ENCODE measurements at regions of chr12 and their contacts with region 1.

Region 1: GRCh38 chr12:55926738-55927587 is 731 bp downstream of the PYM1 start:
- DNase-seq: peak; percentile 70 to 91 (median 87)
- ATAC-seq: peak; percentile 65
- H3K4me3 ChIP-seq: peak overlapping the region; percentile 99
- H3K4me3 Mint-ChIP-seq: peak overlapping the region; percentile 96 to 100 (median 98)
- H3K27ac ChIP-seq: peak overlapping the region; percentile 90
- H3K27ac Mint-ChIP-seq: peak overlapping the region; percentile 96 to 100 (median 97)
- H3K4me1 ChIP-seq: peaks cover 25 to 28% of the 10 kb centered on the region in 2 donors
- H3K4me1 Mint-ChIP-seq: peaks cover 33 to 61% (median 50%) of the 10 kb centered on the region in 7 donors
- H3K27me3 ChIP-seq: no peaks in the 10 kb centered on the region
- H3K27me3 Mint-ChIP-seq: peaks cover 0 to 2% (median 0%) of the 10 kb centered on the region in 5 donors

Region 2: DNA sequence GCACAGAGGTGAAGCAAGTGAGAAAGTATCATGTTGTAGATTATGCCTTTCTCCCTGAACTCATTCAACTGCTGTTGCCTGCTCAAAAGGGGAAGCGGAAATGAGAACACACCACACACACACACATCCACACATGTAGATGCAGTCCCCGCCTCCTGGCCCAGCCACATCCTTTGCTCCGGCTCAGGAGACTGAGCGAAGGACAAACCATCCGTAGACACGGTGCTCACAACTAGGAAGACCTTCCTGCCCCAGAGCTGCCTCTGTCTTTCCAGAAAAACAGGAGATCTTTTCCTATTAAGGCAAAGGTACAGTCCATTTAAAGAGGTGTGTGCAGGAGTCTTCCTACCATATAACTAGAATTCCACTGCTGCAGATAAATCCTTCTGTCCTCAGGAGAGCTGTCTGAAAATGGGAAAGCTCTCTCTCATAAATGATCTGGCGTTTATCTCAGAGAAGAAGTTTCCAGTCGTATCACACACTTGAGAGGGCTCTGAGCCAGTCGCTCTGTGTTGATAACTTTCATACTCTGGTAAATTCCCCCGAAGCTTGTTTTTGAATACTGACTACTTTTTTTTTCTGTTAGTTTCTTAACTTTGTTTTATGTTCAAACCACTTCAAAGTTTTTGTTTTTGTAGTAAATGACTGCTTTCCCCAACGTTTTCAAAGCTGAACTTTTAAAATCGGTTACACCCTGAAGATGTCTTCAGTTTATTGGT is 942.1 kb before region 1 on chr12 and contains the start of gene TESPA1:
- CTCF ChIA-PET with region 1: no interaction called
- POLR2A ChIA-PET with region 1: no interaction called
- intact Hi-C with region 1: loop called in 1 of 2 experiments (anchors 5 kb)
- DNase-seq: peak; percentile 55 to 94 (median 90)
- ATAC-seq: peak; percentile 93
- H3K4me3 ChIP-seq: peak within 1 kb of the TSS; percentile 67
- H3K4me3 Mint-ChIP-seq: peak within 1 kb of the TSS; percentile 90 to 98 (median 95)
- H3K27ac ChIP-seq: peak within 1 kb of the TSS; percentile 94
- H3K27ac Mint-ChIP-seq: peak within 1 kb of the TSS; percentile 95 to 100 (median 98)
- H3K4me1 ChIP-seq: peaks cover 49 to 51% of the 10 kb centered on the region in 2 donors
- H3K4me1 Mint-ChIP-seq: peaks cover 45 to 78% (median 69%) of the 10 kb centered on the region in 7 donors
- H3K27me3 ChIP-seq: no peaks in the 10 kb centered on the region
- H3K27me3 Mint-ChIP-seq: no peaks in the 10 kb centered on the region
- total RNA-seq, gene TESPA1: 120 to 301 (median 186) TPM

Region 3: GRCh38 chr12:55817346-55818139 is 109.4 kb before region 1 on chr12 and contains the starts of genes ORMDL2 and SARNP:
- CTCF ChIA-PET with region 1: interaction called, 8 read pairs
- POLR2A ChIA-PET with region 1: interaction called, 243 read pairs
- intact Hi-C with region 1: loop called (anchors 1 kb)
- DNase-seq: peak; percentile 81 to 99 (median 98)
- ATAC-seq: peak; percentile 96
- H3K4me3 ChIP-seq: peak within 1 kb of the TSS; percentile 94
- H3K4me3 Mint-ChIP-seq: no peak within 1 kb of the TSS
- H3K27ac ChIP-seq: peak within 1 kb of the TSS; percentile 88
- H3K27ac Mint-ChIP-seq: no peak within 1 kb of the TSS
- H3K4me1 ChIP-seq: peaks cover 22 to 41% of the 10 kb centered on the region in 2 donors
- H3K4me1 Mint-ChIP-seq: peaks cover 32 to 45% (median 37%) of the 10 kb centered on the region in 7 donors
- H3K27me3 ChIP-seq: no peaks in the 10 kb centered on the region
- H3K27me3 Mint-ChIP-seq: no peaks in the 10 kb centered on the region
- total RNA-seq, gene ORMDL2: 12.3 to 67.3 (median 40.5) TPM
- total RNA-seq, gene SARNP: 28.0 to 73.0 (median 41.7) TPM

Region 4: DNA sequence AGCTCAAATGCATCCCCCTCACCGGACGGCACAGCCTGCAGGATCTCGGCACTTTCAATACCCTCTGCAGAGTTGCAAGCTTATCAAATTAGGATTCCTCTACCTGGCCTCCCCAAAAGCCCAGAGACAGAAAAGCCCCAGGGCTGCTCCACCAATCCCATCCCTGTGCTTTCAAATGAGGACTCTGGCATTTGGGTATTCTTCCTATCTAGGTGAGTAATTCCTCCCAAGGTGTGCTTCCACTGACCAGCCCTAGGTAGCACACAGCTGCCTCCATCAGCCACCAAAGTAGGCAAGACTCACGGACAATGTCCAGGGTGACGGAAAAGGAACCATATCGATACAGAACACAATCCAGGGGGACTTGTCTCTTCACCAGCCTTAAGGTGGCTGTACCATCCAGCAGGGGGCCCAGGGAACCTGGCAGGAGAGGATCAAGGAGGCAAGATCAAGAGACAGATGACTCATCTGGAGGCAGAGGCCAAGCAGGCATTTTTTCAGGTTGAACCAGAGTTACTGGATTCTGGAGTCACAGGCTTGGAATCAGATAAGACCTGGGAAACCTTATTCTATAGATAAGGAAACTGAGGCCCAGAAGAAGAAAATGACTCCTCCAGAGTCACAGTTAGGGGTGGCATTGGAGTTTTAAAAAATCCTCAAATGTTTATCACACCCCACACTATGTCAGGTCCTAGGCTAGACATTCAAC is 29.0 kb after region 1 on chr12:
- CTCF ChIA-PET with region 1: interaction called, 4 read pairs
- POLR2A ChIA-PET with region 1: interaction called, 728 read pairs
- intact Hi-C with region 1: loop called in 1 of 2 experiments (anchors 1 kb)
- DNase-seq: peak in 4 of 9 donors; percentile 41 to 47 (median 44)
- ATAC-seq: peak; percentile 71
- H3K4me3 ChIP-seq: no peak overlapping the region
- H3K4me3 Mint-ChIP-seq: peak overlapping the region in 1 of 10 donors; percentile 21
- H3K27ac ChIP-seq: peak overlapping the region; percentile 22
- H3K27ac Mint-ChIP-seq: peak overlapping the region; percentile 6 to 90 (median 78)
- H3K4me1 ChIP-seq: peaks cover 4 to 8% of the 10 kb centered on the region in 2 donors
- H3K4me1 Mint-ChIP-seq: peaks cover 12 to 38% (median 21%) of the 10 kb centered on the region in 7 donors
- H3K27me3 ChIP-seq: no peaks in the 10 kb centered on the region
- H3K27me3 Mint-ChIP-seq: no peaks in the 10 kb centered on the region

Region 5: GRCh38 chr12:56041552-56042429 is 114.8 kb after region 1 on chr12 and contains the start of gene RPS26:
- CTCF ChIA-PET with region 1: no interaction called
- POLR2A ChIA-PET with region 1: no interaction called
- intact Hi-C with region 1: loop called (anchors 1 to 2 kb)
- DNase-seq: peak; percentile 75 to 97 (median 94)
- ATAC-seq: peak; percentile 94
- H3K4me3 ChIP-seq: peak within 1 kb of the TSS; percentile 100
- H3K4me3 Mint-ChIP-seq: peak within 1 kb of the TSS; percentile 91 to 100 (median 98)
- H3K27ac ChIP-seq: peak within 1 kb of the TSS; percentile 84
- H3K27ac Mint-ChIP-seq: peak within 1 kb of the TSS; percentile 94 to 99 (median 97)
- H3K4me1 ChIP-seq: peaks cover 16 to 19% of the 10 kb centered on the region in 2 donors
- H3K4me1 Mint-ChIP-seq: peaks cover 14 to 56% (median 34%) of the 10 kb centered on the region in 7 donors
- H3K27me3 ChIP-seq: no peaks in the 10 kb centered on the region
- H3K27me3 Mint-ChIP-seq: no peaks in the 10 kb centered on the region
- total RNA-seq, gene RPS26: 40.8 to 64.5 (median 46.4) TPM

Region 6: GRCh38 chr12:56468216-56469006 is 541.4 kb after region 1 on chr12 and contains the start of gene SPRYD4:
- CTCF ChIA-PET with region 1: no interaction called
- POLR2A ChIA-PET with region 1: interaction called, 4 read pairs
- intact Hi-C with region 1: loop called in 1 of 2 experiments (anchors 1 kb)
- DNase-seq: peak; percentile 89 to 97 (median 96)
- ATAC-seq: peak; percentile 99
- H3K4me3 ChIP-seq: peak within 1 kb of the TSS; percentile 99
- H3K4me3 Mint-ChIP-seq: peak within 1 kb of the TSS; percentile 90 to 99 (median 97)
- H3K27ac ChIP-seq: peak within 1 kb of the TSS; percentile 87
- H3K27ac Mint-ChIP-seq: peak within 1 kb of the TSS; percentile 92 to 99 (median 98)
- H3K4me1 ChIP-seq: peaks cover 12 to 20% of the 10 kb centered on the region in 2 donors
- H3K4me1 Mint-ChIP-seq: peaks cover 6 to 51% (median 26%) of the 10 kb centered on the region in 7 donors
- H3K27me3 ChIP-seq: no peaks in the 10 kb centered on the region
- H3K27me3 Mint-ChIP-seq: no peaks in the 10 kb centered on the region
- total RNA-seq, gene SPRYD4: 5.2 to 7.5 (median 7.2) TPM

Region 7: GRCh38 chr12:56521590-56522371 is 594.8 kb after region 1 on chr12 and contains the start of gene RBMS2:
- CTCF ChIA-PET with region 1: no interaction called
- POLR2A ChIA-PET with region 1: no interaction called
- intact Hi-C with region 1: no loop called
- DNase-seq: peak in 8 of 9 donors; percentile 23 to 74 (median 58)
- ATAC-seq: peak; percentile 97
- H3K4me3 ChIP-seq: peak within 1 kb of the TSS; percentile 44
- H3K4me3 Mint-ChIP-seq: peak within 1 kb of the TSS; percentile 79 to 98 (median 91)
- H3K27ac ChIP-seq: peak within 1 kb of the TSS; percentile 70
- H3K27ac Mint-ChIP-seq: peak within 1 kb of the TSS; percentile 60 to 97 (median 82)
- H3K4me1 ChIP-seq: peaks cover 6 to 23% of the 10 kb centered on the region in 2 donors
- H3K4me1 Mint-ChIP-seq: peaks cover 25 to 40% (median 37%) of the 10 kb centered on the region in 7 donors
- H3K27me3 ChIP-seq: no peaks in the 10 kb centered on the region
- H3K27me3 Mint-ChIP-seq: peaks cover 0 to 2% (median 0%) of the 10 kb centered on the region in 5 donors
- total RNA-seq, gene RBMS2: 2.5 to 12.8 (median 5.5) TPM

Region 8: DNA sequence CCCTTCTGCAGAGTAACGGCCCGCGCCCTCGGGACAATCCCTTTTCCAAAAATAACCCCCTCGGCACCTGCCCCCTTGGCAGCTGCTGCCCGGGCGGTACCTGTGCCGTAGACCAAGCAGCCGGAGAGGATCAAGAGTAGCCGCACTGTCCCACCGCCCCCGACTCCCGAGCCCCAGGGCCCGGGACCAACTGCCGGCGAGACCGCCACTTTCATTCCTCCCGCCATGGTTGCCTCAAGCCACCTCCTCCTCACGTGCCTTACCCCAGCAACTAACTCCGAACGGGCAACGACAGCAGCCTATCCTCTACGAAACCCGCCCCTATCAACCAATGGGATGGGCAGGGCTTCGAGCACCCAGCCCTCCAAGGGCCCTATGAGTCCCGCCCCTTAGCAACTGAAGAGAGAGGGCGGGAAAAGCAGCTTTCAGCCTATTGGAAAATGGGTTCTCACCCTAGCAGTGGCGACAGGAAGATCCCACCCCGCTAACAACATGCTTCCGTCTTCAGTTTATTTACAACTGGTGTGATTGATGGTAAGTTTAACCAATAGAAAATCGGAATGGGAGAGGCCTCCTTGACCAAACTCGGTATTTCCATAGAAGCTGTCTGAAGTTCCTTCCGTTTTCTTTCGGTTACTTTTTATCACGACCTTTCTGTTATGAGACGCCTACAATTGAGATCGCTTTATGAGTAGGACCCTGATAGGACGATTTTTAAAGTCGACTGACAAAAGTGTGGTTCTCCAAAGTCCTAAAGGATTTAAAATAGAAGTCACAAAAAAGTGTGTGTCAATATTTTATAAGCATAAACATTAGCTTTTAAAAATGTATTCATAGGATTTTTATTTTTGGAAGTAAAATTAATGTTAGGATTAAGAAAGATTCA is 1151.8 kb after region 1 on chr12 and contains the start of gene NEMP1:
- CTCF ChIA-PET with region 1: no interaction called
- POLR2A ChIA-PET with region 1: no interaction called
- intact Hi-C with region 1: loop called in 1 of 2 experiments (anchors 5 kb)
- DNase-seq: peak; percentile 65 to 99 (median 98)
- ATAC-seq: peak; percentile 98
- H3K4me3 ChIP-seq: peak within 1 kb of the TSS; percentile 84
- H3K4me3 Mint-ChIP-seq: peak within 1 kb of the TSS; percentile 86 to 99 (median 94)
- H3K27ac ChIP-seq: peak within 1 kb of the TSS; percentile 85
- H3K27ac Mint-ChIP-seq: peak within 1 kb of the TSS; percentile 89 to 99 (median 92)
- H3K4me1 ChIP-seq: peaks cover 6 to 7% of the 10 kb centered on the region in 2 donors
- H3K4me1 Mint-ChIP-seq: peaks cover 0 to 49% (median 25%) of the 10 kb centered on the region in 7 donors
- H3K27me3 ChIP-seq: no peaks in the 10 kb centered on the region
- H3K27me3 Mint-ChIP-seq: no peaks in the 10 kb centered on the region
- total RNA-seq, gene NEMP1: 13.1 to 47.6 (median 29.3) TPM

Region 9: DNA sequence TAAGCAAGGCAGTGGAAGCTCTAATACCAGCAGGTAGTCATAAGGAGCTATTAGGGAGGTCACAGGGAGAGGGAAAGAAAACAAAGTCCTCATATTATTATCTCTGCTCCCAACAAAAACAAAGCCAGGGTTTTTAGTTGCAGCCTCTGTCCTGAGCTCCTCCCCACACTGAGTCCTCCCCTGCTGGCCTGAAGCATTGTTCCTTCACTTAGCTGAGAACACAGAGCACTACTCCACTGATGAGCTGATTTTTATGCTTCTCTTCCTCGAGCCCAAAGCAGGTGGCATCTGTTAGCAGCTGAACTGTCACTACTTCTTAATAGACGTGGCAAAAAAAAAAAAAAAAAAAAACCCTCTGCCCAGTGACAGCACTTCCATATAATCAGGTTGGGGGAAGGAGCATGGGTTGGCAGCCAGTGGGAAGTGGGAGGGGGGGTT is 1334.5 kb after region 1 on chr12:
- CTCF ChIA-PET with region 1: no interaction called
- POLR2A ChIA-PET with region 1: no interaction called
- intact Hi-C with region 1: no loop called
- DNase-seq: no peak
- ATAC-seq: no peak
- H3K4me3 ChIP-seq: no peak overlapping the region
- H3K4me3 Mint-ChIP-seq: no peak overlapping the region
- H3K27ac ChIP-seq: no peak overlapping the region
- H3K27ac Mint-ChIP-seq: peak overlapping the region in 1 of 9 donors; percentile 64
- H3K4me1 ChIP-seq: no peaks in the 10 kb centered on the region
- H3K4me1 Mint-ChIP-seq: peaks cover 0 to 5% (median 0%) of the 10 kb centered on the region in 7 donors
- H3K27me3 ChIP-seq: no peaks in the 10 kb centered on the region
- H3K27me3 Mint-ChIP-seq: no peaks in the 10 kb centered on the region

Measured in naive thymus-derived CD4-positive, alpha-beta T cell (primary cell).